ENCODE measurements at regions of chr20 and their contacts with region 1.

Region 1: GRCh38 chr20:324177-325044 is 941 bp upstream of the SOX12 start:
- DNase-seq: peak; percentile 90

Region 2: GRCh38 chr20:266596-267562 is 57.5 kb before region 1 on chr20:
- in situ Hi-C with region 1: loop called (anchors 10 kb)
- DNase-seq: peak; percentile 80

Measured in SK-MEL-5 (cell line).